ENCODE measurements at regions of chr14 and their contacts with region 1.

Region 1: GRCh38 chr14:97707603-97708002 is 910.4 kb downstream of the VRK1 start:
- DNase-seq: peak; percentile 75
- H3K4me3 Mint-ChIP-seq: no peak overlapping the region
- H3K27ac Mint-ChIP-seq: peak overlapping the region; percentile 28
- H3K4me1 Mint-ChIP-seq: peaks cover 72% of the 10 kb centered on the region
- H3K27me3 Mint-ChIP-seq: no peaks in the 10 kb centered on the region

Region 2: DNA sequence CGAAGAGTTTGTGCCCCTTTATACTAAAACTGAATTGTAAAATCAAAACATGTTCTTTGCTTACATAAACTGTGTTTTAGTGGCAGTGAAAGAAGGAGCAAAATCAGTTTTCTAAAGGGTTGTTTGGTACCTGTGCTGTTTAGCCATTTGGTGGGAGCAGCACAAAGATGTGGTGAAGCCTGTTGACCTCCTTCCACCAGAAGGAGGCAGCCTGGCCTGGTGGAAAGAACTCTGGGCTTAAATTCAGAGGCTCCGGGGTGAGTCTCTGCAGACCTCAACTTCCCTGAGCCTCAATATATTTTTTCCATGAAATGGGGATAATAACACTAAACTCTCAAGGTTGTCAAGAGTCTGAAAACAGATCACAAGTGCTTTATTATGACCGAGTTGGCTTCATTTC is 407.9 kb before region 1 on chr14:
- intact Hi-C with region 1: loop called (anchors 10 kb)
- DNase-seq: peak; percentile 73
- H3K4me3 Mint-ChIP-seq: no peak overlapping the region
- H3K27ac Mint-ChIP-seq: no peak overlapping the region
- H3K4me1 Mint-ChIP-seq: peaks cover 6% of the 10 kb centered on the region
- H3K27me3 Mint-ChIP-seq: peaks cover 17% of the 10 kb centered on the region

Region 3: GRCh38 chr14:97380539-97380941 is 327.1 kb before region 1 on chr14:
- intact Hi-C with region 1: loop called (anchors 10 kb)
- DNase-seq: peak; percentile 74
- H3K4me3 Mint-ChIP-seq: peak overlapping the region; percentile 33
- H3K27ac Mint-ChIP-seq: peak overlapping the region; percentile 78
- H3K4me1 Mint-ChIP-seq: peaks cover 43% of the 10 kb centered on the region
- H3K27me3 Mint-ChIP-seq: no peaks in the 10 kb centered on the region

Region 4: DNA sequence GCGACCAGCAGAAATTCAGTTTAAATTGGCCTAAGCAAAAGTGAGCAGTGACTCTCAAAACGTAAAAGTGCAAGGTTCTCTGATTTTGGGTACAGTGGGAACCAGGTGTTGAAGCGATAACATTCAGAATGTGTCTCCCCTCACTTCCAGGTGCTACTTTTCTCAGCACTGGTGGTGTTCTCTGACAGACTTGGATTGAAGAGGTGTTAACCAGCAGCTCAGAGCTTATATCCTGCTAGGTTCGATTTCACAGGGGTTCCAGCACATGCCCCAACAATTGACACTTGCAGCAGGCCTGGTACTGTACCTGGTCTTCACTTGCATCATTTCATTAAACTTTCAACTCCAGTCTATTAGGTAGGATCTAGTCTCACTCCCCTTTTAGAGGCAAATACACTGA is 230.2 kb before region 1 on chr14:
- intact Hi-C with region 1: no loop called
- DNase-seq: no peak
- H3K4me3 Mint-ChIP-seq: no peak overlapping the region
- H3K27ac Mint-ChIP-seq: no peak overlapping the region
- H3K4me1 Mint-ChIP-seq: peaks cover 2% of the 10 kb centered on the region
- H3K27me3 Mint-ChIP-seq: no peaks in the 10 kb centered on the region

Region 5: DNA sequence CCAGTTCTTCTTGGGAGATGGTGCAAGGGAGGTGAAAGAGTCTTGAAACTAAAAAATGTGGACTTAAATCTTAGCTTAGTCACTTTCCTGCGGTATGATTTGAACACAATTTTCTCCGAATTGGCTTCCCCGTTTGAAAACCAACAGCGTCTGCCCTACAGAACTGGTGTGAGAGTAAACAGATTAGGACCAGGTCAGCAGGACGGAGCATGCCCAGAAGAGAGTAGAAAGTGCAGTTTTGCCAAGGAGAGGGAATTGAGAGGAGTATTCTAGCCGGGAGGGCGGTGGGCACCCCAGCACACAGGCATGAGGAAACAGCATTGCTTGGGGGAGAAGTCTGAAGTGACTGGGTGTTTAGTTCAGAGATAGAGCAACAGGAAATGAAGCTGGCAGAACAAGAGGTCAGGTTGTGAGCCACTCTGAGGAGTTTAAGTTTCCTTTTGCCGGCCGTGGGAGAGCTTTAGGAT is 16.7 kb after region 1 on chr14:
- intact Hi-C with region 1: loop called (anchors 1 kb)
- DNase-seq: peak; percentile 81
- H3K4me3 Mint-ChIP-seq: peak overlapping the region; percentile 80
- H3K27ac Mint-ChIP-seq: peak overlapping the region; percentile 93
- H3K4me1 Mint-ChIP-seq: peaks cover 48% of the 10 kb centered on the region
- H3K27me3 Mint-ChIP-seq: no peaks in the 10 kb centered on the region

Region 6: GRCh38 chr14:97747316-97747715 is 39.7 kb after region 1 on chr14:
- intact Hi-C with region 1: no loop called
- DNase-seq: no peak
- H3K4me3 Mint-ChIP-seq: no peak overlapping the region
- H3K27ac Mint-ChIP-seq: no peak overlapping the region
- H3K4me1 Mint-ChIP-seq: no peaks in the 10 kb centered on the region
- H3K27me3 Mint-ChIP-seq: no peaks in the 10 kb centered on the region

Region 7: DNA sequence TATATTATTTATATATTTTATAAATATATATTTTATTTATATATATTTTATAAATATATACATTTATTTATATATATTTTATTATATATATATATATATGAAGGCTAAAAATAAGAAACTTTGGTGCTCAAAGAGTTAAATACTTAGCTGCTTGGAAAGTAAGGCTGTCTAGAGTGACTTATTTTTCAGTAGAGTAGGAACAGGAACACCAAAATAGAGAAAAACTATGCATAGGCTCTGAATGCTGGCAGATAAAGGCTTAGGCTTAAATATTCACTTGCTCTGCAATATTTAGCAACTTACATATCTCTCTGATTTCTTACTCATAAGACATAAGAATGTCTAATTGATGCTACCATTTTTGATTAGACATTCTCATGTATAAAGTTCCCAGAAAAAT is 80.8 kb after region 1 on chr14:
- intact Hi-C with region 1: loop called (anchors 5 kb)
- DNase-seq: no peak
- H3K4me3 Mint-ChIP-seq: no peak overlapping the region
- H3K27ac Mint-ChIP-seq: no peak overlapping the region
- H3K4me1 Mint-ChIP-seq: peaks cover 21% of the 10 kb centered on the region
- H3K27me3 Mint-ChIP-seq: no peaks in the 10 kb centered on the region

Measured in activated CD4-positive, alpha-beta T cell treated with anti-CD3 and anti-CD28 coated beads, Interleukin-2, amount 10 ng/mL, durations not matched to agents 24 days and 14 days (primary cell).